Endothelial cell of umbilical vein (primary cell): ENCODE measurements at regions of chr5 and their contacts with region 1.

Region 1: GRCh38 chr5:132064738-132065331 is 4.4 kb downstream of the IL3 start:
- DNase-seq: peak; percentile 78
- H3K4me3 ChIP-seq: no peak overlapping the region
- H3K27ac ChIP-seq: no peak overlapping the region
- H3K4me1 ChIP-seq: no peaks in the 10 kb centered on the region
- H3K27me3 ChIP-seq: no peaks in the 10 kb centered on the region
- CTCF ChIP-seq: peak; percentile 93 to 97
- POLR2A ChIP-seq: no peak

Region 2: DNA sequence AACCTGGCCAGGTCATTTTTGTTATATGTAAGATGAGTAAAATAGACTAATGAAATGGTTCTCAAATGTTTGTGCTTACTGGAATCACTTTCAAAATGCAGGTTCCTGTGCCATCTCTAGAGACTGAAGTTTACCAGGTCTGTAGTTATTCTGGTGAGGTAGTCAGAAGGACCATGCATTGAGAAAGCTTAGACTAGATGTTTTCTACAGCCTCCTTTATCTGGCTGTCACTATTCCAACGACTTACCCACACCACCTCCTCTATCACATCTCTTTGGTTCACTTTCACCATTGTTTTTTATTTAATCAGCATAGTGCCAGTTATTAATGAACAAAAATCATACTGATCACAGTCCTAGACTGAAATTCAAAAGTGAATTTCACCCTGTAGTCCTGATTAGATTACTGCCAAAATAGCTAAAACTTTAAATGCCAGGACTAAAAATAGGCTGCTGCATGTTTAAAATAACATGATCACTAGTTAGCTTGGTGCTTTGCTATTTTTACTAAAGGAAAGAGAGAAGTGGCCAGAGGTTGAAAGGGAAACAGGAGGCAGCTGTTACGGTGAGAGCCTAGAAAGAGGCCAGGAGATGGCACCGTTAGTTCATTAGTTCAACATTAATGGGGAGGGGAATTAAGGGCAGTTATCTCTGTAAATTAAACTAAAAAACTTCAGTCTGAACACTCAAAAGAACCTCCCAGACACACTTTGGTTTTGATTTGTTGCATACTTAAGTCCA is 254.2 kb before region 1 on chr5:
- CTCF ChIA-PET with region 1: interaction called, 8 read pairs
- POLR2A ChIA-PET with region 1: no interaction called
- dilution Hi-C with region 1: no loop called
- intact Hi-C with region 1: loop called (anchors 1 kb)
- DNase-seq: peak; percentile 27
- H3K4me3 ChIP-seq: no peak overlapping the region
- H3K27ac ChIP-seq: no peak overlapping the region
- H3K4me1 ChIP-seq: peaks cover 21% of the 10 kb centered on the region
- H3K27me3 ChIP-seq: no peaks in the 10 kb centered on the region
- CTCF ChIP-seq: peak; percentile 4 to 8
- POLR2A ChIP-seq: no peak

Region 3: GRCh38 chr5:132134384-132134783 is 69.5 kb after region 1 on chr5:
- CTCF ChIA-PET with region 1: interaction called, 32 read pairs
- POLR2A ChIA-PET with region 1: no interaction called
- dilution Hi-C with region 1: no loop called
- intact Hi-C with region 1: loop called (anchors 1 kb)
- DNase-seq: peak; percentile 36
- H3K4me3 ChIP-seq: no peak overlapping the region
- H3K27ac ChIP-seq: no peak overlapping the region
- H3K4me1 ChIP-seq: no peaks in the 10 kb centered on the region
- H3K27me3 ChIP-seq: peaks cover 4 to 10% of the 10 kb centered on the region in 2 experiments
- CTCF ChIP-seq: peak; percentile 26 to 36
- POLR2A ChIP-seq: no peak

Region 4: DNA sequence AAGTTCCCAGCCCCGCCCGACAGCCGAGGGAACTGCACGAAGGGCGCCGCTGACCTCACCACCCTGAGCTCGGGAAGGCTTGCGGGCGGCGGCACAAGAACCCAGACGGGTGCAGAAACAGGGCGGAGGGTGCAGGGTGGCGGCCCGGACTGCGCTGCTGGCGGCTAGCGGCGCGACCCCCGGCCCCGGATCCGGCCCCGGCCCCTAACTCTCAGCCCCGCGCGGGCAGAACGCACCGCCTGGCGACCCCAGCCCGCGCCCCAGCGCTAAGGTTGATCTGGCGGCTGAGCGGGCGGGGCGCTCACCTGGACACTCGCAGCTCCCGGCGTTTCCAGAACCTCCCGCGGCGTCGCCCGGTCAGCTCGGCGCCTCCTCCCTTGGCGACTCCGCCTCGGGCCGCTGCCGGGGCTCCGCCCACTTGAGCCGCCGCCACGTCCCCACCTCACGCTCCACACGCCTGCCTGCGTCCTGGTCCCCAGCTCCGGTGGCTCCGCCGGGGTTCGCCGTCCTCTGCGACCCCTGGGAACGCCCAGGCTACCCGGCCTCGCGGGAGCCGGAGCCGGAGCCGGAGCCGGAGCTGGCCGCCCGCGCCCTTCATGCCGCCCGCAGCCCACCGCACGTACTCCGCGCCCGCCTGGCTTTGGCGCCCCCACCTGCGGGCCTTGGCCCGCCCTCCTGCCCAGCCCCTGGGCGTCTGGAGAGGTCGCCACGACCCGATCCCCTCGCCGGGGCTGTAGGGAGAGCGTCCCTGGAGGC is 162.8 kb after region 1 on chr5 and contains the start of gene P4HA2:
- CTCF ChIA-PET with region 1: interaction called, 5 read pairs
- POLR2A ChIA-PET with region 1: no interaction called
- dilution Hi-C with region 1: no loop called
- intact Hi-C with region 1: loop called (anchors 2 kb)
- DNase-seq: peak; percentile 71
- H3K4me3 ChIP-seq: peak within 1 kb of the TSS; percentile 44 to 61 (median 46)
- H3K27ac ChIP-seq: peak within 1 kb of the TSS; percentile 28
- H3K4me1 ChIP-seq: no peaks in the 10 kb centered on the region
- H3K27me3 ChIP-seq: peaks cover 0 to 1% of the 10 kb centered on the region in 2 experiments
- CTCF ChIP-seq: no peak
- POLR2A ChIP-seq: peak; percentile 56
- total RNA-seq, gene P4HA2: 37.4 and 37.6 TPM in 2 replicates

Region 5: DNA sequence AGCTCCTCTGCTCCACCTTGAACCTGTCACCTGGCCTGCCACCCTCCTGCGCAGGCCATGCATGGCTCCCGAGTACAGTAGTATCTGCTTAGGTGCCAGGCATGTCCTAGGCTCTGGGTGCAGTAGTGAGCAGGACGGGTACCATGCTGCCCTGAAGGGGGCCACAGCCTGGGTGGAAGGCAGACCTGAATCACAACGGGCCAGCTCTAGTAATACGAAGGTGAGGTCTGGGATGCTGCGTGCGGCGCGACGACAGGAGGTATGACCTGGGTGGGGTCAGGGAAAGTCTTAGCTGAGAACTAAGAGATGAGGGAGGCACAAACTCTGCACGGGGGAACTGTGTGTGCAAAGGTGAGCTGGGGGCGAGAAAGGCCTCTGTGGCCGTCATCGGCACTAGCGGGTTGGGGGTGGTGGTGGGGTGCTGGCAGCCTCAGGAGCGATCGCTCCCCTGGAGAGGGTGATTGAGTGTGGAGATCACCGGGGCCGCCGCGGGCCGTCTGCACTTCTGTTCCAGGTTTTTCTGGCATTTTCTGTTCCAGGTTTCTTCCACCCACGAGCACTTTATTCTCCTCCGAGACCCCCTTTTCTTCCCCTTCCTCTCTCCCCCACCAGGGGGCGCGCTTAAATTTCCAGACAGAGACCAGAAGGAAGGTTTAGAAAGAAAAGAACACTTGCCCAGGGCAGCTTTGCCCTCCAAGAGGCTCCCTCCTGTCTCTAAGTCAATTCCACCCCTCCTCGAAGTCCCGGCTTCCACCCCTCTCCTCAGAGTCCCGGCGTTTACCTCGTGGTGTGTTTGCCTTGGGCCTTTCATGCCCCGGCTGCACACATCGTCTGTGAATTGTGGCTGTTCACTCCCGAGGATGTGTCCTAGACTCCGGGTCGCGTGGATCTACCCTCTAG is 207.7 kb after region 1 on chr5:
- CTCF ChIA-PET with region 1: no interaction called
- POLR2A ChIA-PET with region 1: no interaction called
- dilution Hi-C with region 1: no loop called
- intact Hi-C with region 1: loop called (anchors 2 kb)
- DNase-seq: peak; percentile 70
- H3K4me3 ChIP-seq: no peak overlapping the region
- H3K27ac ChIP-seq: no peak overlapping the region
- H3K4me1 ChIP-seq: no peaks in the 10 kb centered on the region
- H3K27me3 ChIP-seq: no peaks in the 10 kb centered on the region
- CTCF ChIP-seq: peak; percentile 79 to 81
- POLR2A ChIP-seq: peak; percentile 36